Activated CD4-positive, alpha-beta T cell treated with anti-CD3 and anti-CD28 coated beads for 36 hours (primary cell): ENCODE measurements at regions of chr10 and their contacts with region 1.

Region 1: DNA sequence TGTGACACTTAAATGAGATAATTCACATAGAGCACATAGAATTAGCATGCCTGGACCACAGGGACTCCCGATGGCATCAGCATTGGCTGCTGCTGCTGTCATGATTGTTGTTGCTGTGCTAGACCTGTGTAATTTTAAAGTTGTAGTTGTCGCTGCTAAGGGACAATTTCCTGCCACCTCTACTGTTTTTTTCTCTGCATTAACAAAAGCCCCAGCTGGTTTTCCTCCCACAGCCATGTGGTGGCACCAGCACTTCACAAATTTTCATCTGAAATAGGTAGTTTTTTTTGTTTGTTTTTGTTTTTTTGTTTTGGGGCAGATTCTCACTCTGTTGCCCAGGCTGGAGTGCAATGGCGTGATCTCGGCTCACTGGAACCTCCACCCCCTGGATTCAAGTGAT is 25.4 kb upstream of the PRXL2A start:
- DNase-seq: peak; percentile 73
- ATAC-seq: peak; percentile 53
- H3K4me3 Mint-ChIP-seq: no peak overlapping the region
- H3K27ac Mint-ChIP-seq: no peak overlapping the region
- H3K4me1 Mint-ChIP-seq: peaks cover 15% of the 10 kb centered on the region
- H3K27me3 Mint-ChIP-seq: no peaks in the 10 kb centered on the region

Region 2: DNA sequence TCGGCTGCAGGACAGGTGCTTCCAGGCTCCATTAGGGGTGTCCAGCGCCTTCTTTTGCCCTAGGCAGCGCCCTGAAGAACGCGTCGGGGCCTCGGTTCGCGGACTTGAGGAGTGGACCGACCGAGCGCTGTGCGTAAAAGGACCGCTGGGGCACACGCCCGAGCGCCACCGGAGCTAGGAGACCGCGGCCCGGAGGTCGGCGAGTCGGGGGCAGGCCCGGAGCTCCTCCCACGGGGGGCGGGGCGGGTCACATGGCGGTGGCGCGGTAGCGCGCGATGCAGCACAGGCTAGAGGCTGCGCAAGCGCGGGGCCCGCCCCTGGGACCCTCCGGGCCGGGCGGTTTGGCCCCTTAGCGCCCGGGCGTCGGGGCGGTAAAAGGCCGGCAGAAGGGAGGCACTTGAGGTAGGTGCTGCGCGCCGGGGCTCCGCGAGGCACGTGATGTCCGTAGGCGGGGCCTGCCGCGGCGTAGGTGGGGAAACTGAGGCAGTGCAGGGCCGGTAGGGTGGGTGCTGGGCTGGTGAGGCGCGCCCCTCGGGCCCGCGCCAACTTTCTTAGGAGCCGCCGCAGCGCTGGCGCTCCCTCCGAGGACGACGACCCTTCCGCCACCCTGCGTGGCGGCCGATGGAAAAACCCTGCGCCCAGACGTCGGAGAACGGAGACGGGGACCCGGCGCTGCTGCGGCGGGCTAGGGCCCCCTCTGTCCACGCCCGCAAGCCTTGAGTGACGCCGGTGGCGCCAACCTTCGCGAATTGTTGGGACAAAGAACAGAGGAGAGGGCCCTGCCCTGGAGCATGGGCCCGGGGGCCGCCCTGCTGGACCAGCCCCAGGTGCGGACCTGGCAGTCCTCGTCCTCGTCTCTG is 25.5 kb after region 1 on chr10 and contains the start of gene PRXL2A:
- CTCF ChIA-PET with region 1: interaction called, 10 read pairs
- POLR2A ChIA-PET with region 1: no interaction called
- intact Hi-C with region 1: no loop called
- DNase-seq: peak; percentile 91
- ATAC-seq: peak; percentile 84
- H3K4me3 Mint-ChIP-seq: peak within 1 kb of the TSS; percentile 76
- H3K27ac Mint-ChIP-seq: peak within 1 kb of the TSS; percentile 94
- H3K4me1 Mint-ChIP-seq: peaks cover 40% of the 10 kb centered on the region
- H3K27me3 Mint-ChIP-seq: no peaks in the 10 kb centered on the region
- total RNA-seq, gene PRXL2A: 15.0 to 17.6 TPM

Region 3: GRCh38 chr10:80509403-80510161 is 126.6 kb after region 1 on chr10:
- CTCF ChIA-PET with region 1: interaction called, 61 read pairs
- POLR2A ChIA-PET with region 1: interaction called, 3 read pairs
- intact Hi-C with region 1: loop called (anchors 1 kb)
- DNase-seq: no peak
- ATAC-seq: no peak
- H3K4me3 Mint-ChIP-seq: no peak overlapping the region
- H3K27ac Mint-ChIP-seq: no peak overlapping the region
- H3K4me1 Mint-ChIP-seq: peaks cover 30% of the 10 kb centered on the region
- H3K27me3 Mint-ChIP-seq: no peaks in the 10 kb centered on the region

Region 4: DNA sequence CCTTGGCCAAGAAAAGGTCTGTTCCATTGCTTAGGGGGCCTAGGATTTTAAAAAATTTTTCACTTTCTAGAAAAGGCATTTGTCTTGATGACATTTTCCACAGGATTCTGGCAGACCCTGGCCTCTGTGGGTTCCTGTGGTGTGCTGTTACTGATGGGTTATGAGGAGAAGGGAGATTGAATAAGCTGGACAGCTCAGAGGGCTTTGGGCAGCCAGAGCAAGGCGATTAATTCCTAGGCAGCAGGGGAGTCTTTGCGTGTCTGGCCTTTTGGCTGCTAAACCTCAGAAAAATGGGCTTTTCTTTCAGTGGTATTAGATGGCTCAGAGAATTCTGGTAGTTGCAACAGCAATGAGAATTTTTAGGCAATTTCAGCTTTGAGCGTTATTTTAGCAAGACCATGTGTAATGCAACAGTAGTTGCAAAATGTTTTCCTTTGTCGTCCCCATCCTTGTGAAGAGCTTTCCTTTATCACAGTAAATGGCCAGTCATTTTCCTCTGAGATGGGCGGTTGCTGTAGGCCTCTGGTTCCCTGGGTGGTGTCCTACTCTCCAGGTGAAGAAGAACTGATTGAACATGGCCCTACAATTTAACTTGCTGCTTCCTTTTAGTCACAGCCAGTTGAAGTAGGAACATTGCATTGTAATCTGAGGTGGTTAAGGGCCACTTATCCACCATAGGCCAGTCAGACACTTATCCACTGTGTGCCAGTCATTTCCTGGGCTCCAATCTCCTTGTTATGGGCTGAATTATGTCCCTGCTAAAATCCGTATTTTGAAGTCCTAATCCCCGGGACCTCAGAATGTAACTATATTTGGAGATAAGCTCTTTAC is 197.9 kb after region 1 on chr10:
- CTCF ChIA-PET with region 1: interaction called, 4 read pairs
- POLR2A ChIA-PET with region 1: no interaction called
- intact Hi-C with region 1: loop called in 1 of 2 experiments (anchors 5 kb)
- DNase-seq: no peak
- ATAC-seq: no peak
- H3K4me3 Mint-ChIP-seq: no peak overlapping the region
- H3K27ac Mint-ChIP-seq: no peak overlapping the region
- H3K4me1 Mint-ChIP-seq: no peaks in the 10 kb centered on the region
- H3K27me3 Mint-ChIP-seq: peaks cover 8% of the 10 kb centered on the region

Region 5: GRCh38 chr10:80662577-80663261 is 279.7 kb after region 1 on chr10:
- CTCF ChIA-PET with region 1: interaction called, 3 read pairs
- POLR2A ChIA-PET with region 1: no interaction called
- intact Hi-C with region 1: loop called in 1 of 2 experiments (anchors 2 kb)
- DNase-seq: peak; percentile 83
- ATAC-seq: peak; percentile 74
- H3K4me3 Mint-ChIP-seq: peak overlapping the region; percentile 24
- H3K27ac Mint-ChIP-seq: no peak overlapping the region
- H3K4me1 Mint-ChIP-seq: peaks cover 2% of the 10 kb centered on the region
- H3K27me3 Mint-ChIP-seq: peaks cover 17% of the 10 kb centered on the region

Region 6: GRCh38 chr10:81018708-81019365 is 635.8 kb after region 1 on chr10:
- CTCF ChIA-PET with region 1: interaction called, 3 read pairs
- POLR2A ChIA-PET with region 1: no interaction called
- intact Hi-C with region 1: loop called in 1 of 2 experiments (anchors 2 kb)
- DNase-seq: peak; percentile 26
- ATAC-seq: peak; percentile 70
- H3K4me3 Mint-ChIP-seq: no peak overlapping the region
- H3K27ac Mint-ChIP-seq: no peak overlapping the region
- H3K4me1 Mint-ChIP-seq: no peaks in the 10 kb centered on the region
- H3K27me3 Mint-ChIP-seq: peaks cover 8% of the 10 kb centered on the region